ENCODE measurements at regions of chr5 and their contacts with region 1.

Region 1: DNA sequence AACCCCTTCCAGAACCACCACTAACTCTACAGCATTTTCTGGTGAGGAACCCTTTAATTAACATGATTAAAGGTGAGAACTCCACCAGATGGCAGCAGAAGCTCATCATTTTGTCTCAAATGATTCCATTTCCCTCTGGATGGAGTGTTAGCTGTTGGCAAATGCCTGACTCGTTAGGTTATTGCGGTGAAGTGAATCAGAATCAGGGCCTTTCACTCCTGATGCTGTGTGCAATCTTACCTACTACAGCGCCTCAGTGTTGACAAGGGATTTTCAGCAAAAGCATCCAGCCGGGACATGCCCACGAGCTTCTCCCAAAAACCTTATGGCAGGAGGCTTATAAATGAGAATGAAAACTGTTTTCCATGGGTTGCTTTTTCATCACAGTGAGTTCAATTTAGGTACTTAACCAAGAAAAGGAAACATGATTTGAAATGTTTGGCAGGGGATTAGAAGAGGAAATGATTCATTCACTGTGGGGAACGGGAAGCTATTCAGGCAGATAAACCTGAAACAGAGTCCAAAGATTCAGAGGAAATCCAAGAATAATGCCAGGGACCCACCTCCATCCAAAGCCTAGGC is 48.0 kb upstream of the CAST start:
- DNase-seq: peak; percentile 56
- ATAC-seq: no peak
- H3K4me3 ChIP-seq: no peak overlapping the region
- H3K4me3 Mint-ChIP-seq: no peak overlapping the region
- H3K27ac ChIP-seq: no peak overlapping the region
- H3K27ac Mint-ChIP-seq: no peak overlapping the region
- H3K4me1 ChIP-seq: peaks cover 0 to 3% of the 10 kb centered on the region in 2 donors
- H3K4me1 Mint-ChIP-seq: no peaks in the 10 kb centered on the region
- H3K27me3 ChIP-seq: peaks cover 0 to 6% (median 0%) of the 10 kb centered on the region in 4 experiments
- H3K27me3 Mint-ChIP-seq: peaks cover 18% of the 10 kb centered on the region
- CTCF ChIP-seq: peak; percentile 75

Region 2: DNA sequence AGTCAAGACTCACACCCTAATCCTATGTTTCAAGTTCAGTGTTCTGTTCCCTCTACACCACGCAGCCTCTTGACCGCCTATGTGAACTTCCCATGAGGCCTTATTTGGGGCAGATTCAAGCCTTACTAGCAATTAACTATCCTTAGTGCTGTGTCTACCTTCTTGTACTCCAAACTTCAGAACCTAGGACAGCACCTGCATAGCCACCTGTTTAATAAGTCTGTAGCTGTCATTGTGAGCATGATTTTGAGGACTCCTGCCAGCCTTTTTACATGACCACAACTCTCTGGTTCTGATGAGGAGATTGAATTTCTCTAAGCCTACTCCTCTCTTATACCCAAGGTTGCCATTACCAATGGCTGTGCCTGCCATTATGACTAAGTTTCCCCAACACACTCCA is 130.3 kb before region 1 on chr5:
- CTCF ChIA-PET with region 1: no interaction called
- POLR2A ChIA-PET with region 1: no interaction called
- intact Hi-C with region 1: no loop called
- DNase-seq: no peak
- ATAC-seq: no peak
- H3K4me3 ChIP-seq: no peak overlapping the region
- H3K4me3 Mint-ChIP-seq: no peak overlapping the region
- H3K27ac ChIP-seq: no peak overlapping the region
- H3K27ac Mint-ChIP-seq: no peak overlapping the region
- H3K4me1 ChIP-seq: no peaks in the 10 kb centered on the region
- H3K4me1 Mint-ChIP-seq: no peaks in the 10 kb centered on the region
- H3K27me3 ChIP-seq: no peaks in the 10 kb centered on the region
- H3K27me3 Mint-ChIP-seq: peaks cover 9% of the 10 kb centered on the region
- CTCF ChIP-seq: no peak

Region 3: GRCh38 chr5:96687812-96688453 is 73.7 kb after region 1 on chr5:
- CTCF ChIA-PET with region 1: interaction called, 28 read pairs
- POLR2A ChIA-PET with region 1: no interaction called
- intact Hi-C with region 1: loop called (anchors 1 kb)
- DNase-seq: peak; percentile 43
- ATAC-seq: peak; percentile 56
- H3K4me3 ChIP-seq: no peak overlapping the region
- H3K4me3 Mint-ChIP-seq: no peak overlapping the region
- H3K27ac ChIP-seq: peak overlapping the region in 1 of 2 donors; percentile 21
- H3K27ac Mint-ChIP-seq: no peak overlapping the region
- H3K4me1 ChIP-seq: peaks cover 7 to 10% of the 10 kb centered on the region in 2 donors
- H3K4me1 Mint-ChIP-seq: peaks cover 26% of the 10 kb centered on the region
- H3K27me3 ChIP-seq: no peaks in the 10 kb centered on the region
- H3K27me3 Mint-ChIP-seq: no peaks in the 10 kb centered on the region
- CTCF ChIP-seq: peak; percentile 62

Region 4: DNA sequence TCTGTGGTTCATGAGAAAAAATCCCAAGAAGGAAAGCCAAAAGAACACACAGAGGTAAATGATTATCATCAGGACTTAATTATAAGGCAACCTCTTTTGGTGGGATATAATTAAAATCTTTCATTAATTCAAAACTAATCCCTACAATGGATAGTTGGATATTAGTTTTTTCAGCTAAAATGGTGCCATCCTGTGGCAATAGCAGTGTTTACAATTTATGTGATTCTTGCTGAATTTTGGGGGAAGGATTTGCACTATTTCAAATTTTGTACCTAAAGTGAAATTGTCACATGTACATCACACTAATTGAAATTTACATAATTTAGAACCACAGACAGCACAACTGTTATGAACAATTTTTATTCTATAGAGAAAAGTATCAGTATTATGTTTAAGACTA is 115.0 kb after region 1 on chr5:
- CTCF ChIA-PET with region 1: interaction called, 37 read pairs
- POLR2A ChIA-PET with region 1: no interaction called
- intact Hi-C with region 1: loop called (anchors 1 kb)
- DNase-seq: no peak
- ATAC-seq: no peak
- H3K4me3 ChIP-seq: no peak overlapping the region
- H3K4me3 Mint-ChIP-seq: no peak overlapping the region
- H3K27ac ChIP-seq: no peak overlapping the region
- H3K27ac Mint-ChIP-seq: no peak overlapping the region
- H3K4me1 ChIP-seq: peaks cover 0 to 3% of the 10 kb centered on the region in 2 donors
- H3K4me1 Mint-ChIP-seq: peaks cover 4% of the 10 kb centered on the region
- H3K27me3 ChIP-seq: no peaks in the 10 kb centered on the region
- H3K27me3 Mint-ChIP-seq: no peaks in the 10 kb centered on the region
- CTCF ChIP-seq: no peak

Measured in B cell (primary cell).